Activated CD8-positive, alpha-beta T cell treated with anti-CD3 and anti-CD28 coated beads for 36 hours (primary cell): ENCODE measurements at regions of chr1 and their contacts with region 1.

Region 1: DNA sequence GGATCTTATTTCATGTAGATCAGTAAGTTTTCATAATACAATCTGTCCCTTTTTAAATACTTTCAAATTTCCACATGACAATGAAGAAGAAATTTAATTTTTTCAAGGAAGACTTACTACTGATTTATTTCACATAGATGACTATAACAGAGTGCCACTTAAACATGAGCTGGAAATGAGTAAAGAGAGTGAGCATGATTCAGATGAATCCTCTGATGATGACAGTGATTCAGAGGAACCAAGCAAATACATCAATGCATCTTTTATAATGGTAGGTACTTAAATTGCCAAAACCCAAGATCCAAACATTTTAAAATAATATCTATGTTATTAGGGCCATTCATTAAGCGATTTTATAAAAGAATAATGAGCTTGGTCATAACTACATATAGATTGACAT is 110.4 kb downstream of the PTPRC start:
- DNase-seq: no peak
- ATAC-seq: no peak
- H3K4me3 Mint-ChIP-seq: no peak overlapping the region
- H3K27ac Mint-ChIP-seq: peak overlapping the region; percentile 73
- H3K4me1 Mint-ChIP-seq: peaks cover 10% of the 10 kb centered on the region
- H3K27me3 Mint-ChIP-seq: no peaks in the 10 kb centered on the region
- CTCF ChIP-seq: no peak

Region 2: GRCh38 chr1:198763298-198763714 is 14.0 kb after region 1 on chr1:
- CTCF ChIA-PET with region 1: interaction called, 3 read pairs
- POLR2A ChIA-PET with region 1: interaction called, 11 read pairs
- intact Hi-C with region 1: no loop called
- DNase-seq: no peak
- ATAC-seq: peak; percentile 53
- H3K4me3 Mint-ChIP-seq: no peak overlapping the region
- H3K27ac Mint-ChIP-seq: no peak overlapping the region
- H3K4me1 Mint-ChIP-seq: peaks cover 46% of the 10 kb centered on the region
- H3K27me3 Mint-ChIP-seq: no peaks in the 10 kb centered on the region
- CTCF ChIP-seq: no peak